ENCODE measurements at regions of chr6 and their contacts with region 1.

Region 1: DNA sequence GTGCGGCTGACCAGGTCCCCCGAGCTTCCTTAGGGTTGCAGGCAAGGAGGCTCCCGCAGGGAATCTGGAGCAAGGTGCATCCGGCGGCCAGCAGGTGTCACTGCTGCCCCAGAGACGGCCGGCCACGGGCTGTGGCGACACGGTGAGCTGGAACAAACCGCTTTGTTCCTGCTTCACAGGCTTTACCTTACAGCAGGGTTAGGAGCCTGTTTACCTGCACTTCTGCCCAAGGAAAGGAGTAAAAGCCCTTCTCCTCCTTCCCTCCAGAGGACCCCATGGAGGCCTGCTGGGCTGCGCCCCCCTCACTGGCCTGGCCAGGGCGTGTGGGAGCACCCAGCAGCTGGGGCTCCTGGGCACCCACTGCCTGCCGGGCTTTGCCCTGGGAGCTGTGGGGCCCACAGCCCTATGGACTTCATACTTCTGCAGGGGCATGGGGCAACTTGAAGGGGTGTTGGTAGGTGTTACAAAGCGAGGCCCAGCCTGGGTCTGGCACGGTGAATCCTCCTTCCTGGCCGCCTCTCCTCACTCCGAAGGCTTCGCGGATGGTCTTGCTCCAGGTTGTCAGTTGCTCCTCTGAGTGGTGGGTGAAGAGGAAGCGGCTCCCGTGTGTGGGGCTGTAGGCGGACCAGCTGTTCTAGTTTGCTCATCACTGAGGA is 88.4 kb downstream of the CDC5L start:
- DNase-seq: peak; percentile 51 to 67 (median 55)
- H3K4me3 ChIP-seq: no peak overlapping the region
- H3K4me3 Mint-ChIP-seq: peak overlapping the region in 1 of 2 donors; percentile 26
- H3K27ac ChIP-seq: no peak overlapping the region
- H3K27ac Mint-ChIP-seq: no peak overlapping the region
- H3K4me1 ChIP-seq: peaks cover 7 to 12% of the 10 kb centered on the region in 2 donors
- H3K4me1 Mint-ChIP-seq: peaks cover 18% of the 10 kb centered on the region
- H3K27me3 ChIP-seq: no peaks in the 10 kb centered on the region
- H3K27me3 Mint-ChIP-seq: peaks cover 3 to 13% (median 3%) of the 10 kb centered on the region in 3 donors
- CTCF ChIP-seq: peak; percentile 97

Region 2: GRCh38 chr6:44593539-44593944 is 117.6 kb after region 1 on chr6:
- intact Hi-C with region 1: loop called in 1 of 2 experiments (anchors 10 kb)
- DNase-seq: peak; percentile 15 to 58 (median 56)
- H3K4me3 ChIP-seq: no peak overlapping the region
- H3K4me3 Mint-ChIP-seq: peak overlapping the region in 1 of 2 donors; percentile 19
- H3K27ac ChIP-seq: no peak overlapping the region
- H3K27ac Mint-ChIP-seq: no peak overlapping the region
- H3K4me1 ChIP-seq: peaks cover 26% of the 10 kb centered on the region in 2 donors
- H3K4me1 Mint-ChIP-seq: peaks cover 41% of the 10 kb centered on the region
- H3K27me3 ChIP-seq: no peaks in the 10 kb centered on the region
- H3K27me3 Mint-ChIP-seq: peaks cover 4 to 9% (median 5%) of the 10 kb centered on the region in 3 donors
- CTCF ChIP-seq: peak; percentile 76

Region 3: GRCh38 chr6:44630125-44631028 is 154.5 kb after region 1 on chr6:
- intact Hi-C with region 1: loop called in 1 of 2 experiments (anchors 10 kb)
- DNase-seq: peak; percentile 19 to 54 (median 34)
- H3K4me3 ChIP-seq: no peak overlapping the region
- H3K4me3 Mint-ChIP-seq: peak overlapping the region in 1 of 2 donors; percentile 5
- H3K27ac ChIP-seq: no peak overlapping the region
- H3K27ac Mint-ChIP-seq: peak overlapping the region in 1 of 7 donors; percentile 36
- H3K4me1 ChIP-seq: peaks cover 49 to 56% of the 10 kb centered on the region in 2 donors
- H3K4me1 Mint-ChIP-seq: peaks cover 56% of the 10 kb centered on the region
- H3K27me3 ChIP-seq: no peaks in the 10 kb centered on the region
- H3K27me3 Mint-ChIP-seq: peaks cover 0 to 11% (median 1%) of the 10 kb centered on the region in 3 donors
- CTCF ChIP-seq: peak; percentile 55

Region 4: GRCh38 chr6:44655412-44656342 is 179.8 kb after region 1 on chr6:
- intact Hi-C with region 1: loop called in 1 of 2 experiments (anchors 10 kb)
- DNase-seq: peak; percentile 80 to 96 (median 81)
- H3K4me3 ChIP-seq: no peak overlapping the region
- H3K4me3 Mint-ChIP-seq: peak overlapping the region in 1 of 2 donors; percentile 77
- H3K27ac ChIP-seq: no peak overlapping the region
- H3K27ac Mint-ChIP-seq: peak overlapping the region; percentile 6 to 86 (median 77)
- H3K4me1 ChIP-seq: peaks cover 20% of the 10 kb centered on the region in 2 donors
- H3K4me1 Mint-ChIP-seq: peaks cover 20% of the 10 kb centered on the region
- H3K27me3 ChIP-seq: peaks cover 0 to 8% of the 10 kb centered on the region in 2 donors
- H3K27me3 Mint-ChIP-seq: peaks cover 9 to 18% (median 14%) of the 10 kb centered on the region in 3 donors
- CTCF ChIP-seq: peak; percentile 92

Region 5: GRCh38 chr6:45714741-45715507 is 1239.0 kb after region 1 on chr6:
- intact Hi-C with region 1: loop called in 1 of 2 experiments (anchors 10 kb)
- DNase-seq: peak; percentile 50 to 79 (median 70)
- H3K4me3 ChIP-seq: no peak overlapping the region
- H3K4me3 Mint-ChIP-seq: no peak overlapping the region
- H3K27ac ChIP-seq: no peak overlapping the region
- H3K27ac Mint-ChIP-seq: peak overlapping the region in 3 of 7 donors; percentile 66 to 82 (median 69)
- H3K4me1 ChIP-seq: peaks cover 23 to 29% of the 10 kb centered on the region in 2 donors
- H3K4me1 Mint-ChIP-seq: peaks cover 37% of the 10 kb centered on the region
- H3K27me3 ChIP-seq: no peaks in the 10 kb centered on the region
- H3K27me3 Mint-ChIP-seq: peaks cover 0 to 7% (median 0%) of the 10 kb centered on the region in 3 donors
- CTCF ChIP-seq: peak; percentile 78

Region 6: GRCh38 chr6:45922728-45923351 is 1446.9 kb after region 1 on chr6:
- intact Hi-C with region 1: loop called (anchors 2 kb)
- DNase-seq: peak; percentile 39 to 58 (median 56)
- H3K4me3 ChIP-seq: no peak overlapping the region
- H3K4me3 Mint-ChIP-seq: no peak overlapping the region
- H3K27ac ChIP-seq: no peak overlapping the region
- H3K27ac Mint-ChIP-seq: no peak overlapping the region
- H3K4me1 ChIP-seq: no peaks in the 10 kb centered on the region
- H3K4me1 Mint-ChIP-seq: peaks cover 5% of the 10 kb centered on the region
- H3K27me3 ChIP-seq: no peaks in the 10 kb centered on the region
- H3K27me3 Mint-ChIP-seq: peaks cover 1 to 2% (median 2%) of the 10 kb centered on the region in 3 donors
- CTCF ChIP-seq: peak; percentile 72

Measured in CD14-positive monocyte (primary cell).